Activated CD4-positive, alpha-beta memory T cell treated with anti-CD3 and anti-CD28 coated beads, Interleukin-2, amount 10 ng/mL, durations not matched to agents 7 days and 5 days (primary cell): ENCODE measurements at regions of chr6 and their contacts with region 1.

Region 1: GRCh38 chr6:125956506-125957390 is at the start of gene HINT3:
- DNase-seq: peak; percentile 97
- H3K4me3 Mint-ChIP-seq: no peak within 1 kb of the TSS
- H3K27ac Mint-ChIP-seq: peak within 1 kb of the TSS; percentile 44
- H3K4me1 Mint-ChIP-seq: peaks cover 8% of the 10 kb centered on the region
- H3K27me3 Mint-ChIP-seq: no peaks in the 10 kb centered on the region
- total RNA-seq, gene HINT3: 11.0 to 11.7 TPM

Region 2: DNA sequence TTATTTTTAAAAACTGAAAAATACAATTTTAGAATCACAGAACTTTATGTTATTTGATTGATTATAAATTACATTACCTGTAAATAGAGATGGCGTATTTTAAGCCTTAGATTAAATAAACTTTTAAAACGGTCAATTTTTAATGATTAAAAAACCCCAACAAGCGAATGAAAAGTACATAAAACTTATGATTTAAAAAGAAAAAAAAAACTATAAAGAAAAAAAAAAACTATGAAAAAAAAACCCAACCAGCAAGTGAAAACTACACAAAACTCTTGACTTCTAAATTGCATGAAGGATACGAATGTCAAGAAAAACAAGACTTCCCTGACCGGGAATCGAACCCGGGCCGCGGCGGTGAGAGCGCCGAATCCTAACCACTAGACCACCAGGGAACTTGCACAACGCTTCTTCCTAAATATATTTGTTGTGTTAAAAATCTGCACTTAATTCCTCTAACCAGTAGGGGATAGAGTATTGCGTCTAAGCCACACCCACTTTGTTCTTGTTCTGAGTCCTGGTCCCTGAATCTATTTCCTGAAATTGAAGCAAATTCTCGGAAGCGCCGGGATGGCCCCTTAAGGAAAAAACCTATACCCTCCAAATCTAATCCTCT is 176.7 kb before region 1 on chr6:
- CTCF ChIA-PET with region 1: interaction called, 80 read pairs
- POLR2A ChIA-PET with region 1: interaction called, 45 read pairs
- DNase-seq: peak; percentile 86
- H3K4me3 Mint-ChIP-seq: no peak overlapping the region
- H3K27ac Mint-ChIP-seq: no peak overlapping the region
- H3K4me1 Mint-ChIP-seq: peaks cover 13% of the 10 kb centered on the region
- H3K27me3 Mint-ChIP-seq: peaks cover 18% of the 10 kb centered on the region

Region 3: GRCh38 chr6:125858427-125859320 is 98.1 kb before region 1 on chr6:
- CTCF ChIA-PET with region 1: interaction called, 34 read pairs
- POLR2A ChIA-PET with region 1: no interaction called
- DNase-seq: peak; percentile 33
- H3K4me3 Mint-ChIP-seq: no peak overlapping the region
- H3K27ac Mint-ChIP-seq: no peak overlapping the region
- H3K4me1 Mint-ChIP-seq: peaks cover 11% of the 10 kb centered on the region
- H3K27me3 Mint-ChIP-seq: no peaks in the 10 kb centered on the region

Region 4: GRCh38 chr6:125906158-125906998 is 50.4 kb before region 1 on chr6:
- CTCF ChIA-PET with region 1: interaction called, 52 read pairs
- POLR2A ChIA-PET with region 1: interaction called, 6 read pairs
- DNase-seq: peak; percentile 45
- H3K4me3 Mint-ChIP-seq: no peak overlapping the region
- H3K27ac Mint-ChIP-seq: no peak overlapping the region
- H3K4me1 Mint-ChIP-seq: peaks cover 52% of the 10 kb centered on the region
- H3K27me3 Mint-ChIP-seq: no peaks in the 10 kb centered on the region

Region 5: GRCh38 chr6:125931733-125932450 is 24.9 kb before region 1 on chr6:
- CTCF ChIA-PET with region 1: interaction called, 11 read pairs
- POLR2A ChIA-PET with region 1: no interaction called
- DNase-seq: no peak
- H3K4me3 Mint-ChIP-seq: no peak overlapping the region
- H3K27ac Mint-ChIP-seq: peak overlapping the region; percentile 4
- H3K4me1 Mint-ChIP-seq: peaks cover 20% of the 10 kb centered on the region
- H3K27me3 Mint-ChIP-seq: no peaks in the 10 kb centered on the region

Region 6: GRCh38 chr6:125968493-125968892 is 11.7 kb after region 1 on chr6:
- CTCF ChIA-PET with region 1: interaction called, 41 read pairs
- POLR2A ChIA-PET with region 1: interaction called, 6 read pairs
- DNase-seq: no peak
- H3K4me3 Mint-ChIP-seq: no peak overlapping the region
- H3K27ac Mint-ChIP-seq: no peak overlapping the region
- H3K4me1 Mint-ChIP-seq: no peaks in the 10 kb centered on the region
- H3K27me3 Mint-ChIP-seq: no peaks in the 10 kb centered on the region

Region 7: DNA sequence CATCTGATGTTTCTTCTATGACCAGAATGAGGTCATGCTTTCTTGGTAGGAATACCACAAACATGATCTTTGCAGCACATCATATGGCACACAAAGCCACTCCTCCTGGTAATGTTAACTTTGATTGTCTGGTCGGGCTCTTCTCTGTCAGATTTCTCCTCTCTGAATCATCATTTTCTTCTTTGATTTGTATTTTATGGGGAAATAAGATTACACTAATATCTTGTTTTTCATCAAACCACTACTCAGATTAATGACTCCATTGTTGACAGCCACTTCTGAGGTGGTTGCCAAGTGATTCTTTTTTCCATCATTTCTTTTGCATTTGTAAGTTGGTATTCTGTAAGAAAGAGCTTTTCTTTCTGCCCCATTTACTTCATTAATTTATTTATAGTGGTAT is 59.1 kb after region 1 on chr6:
- CTCF ChIA-PET with region 1: no interaction called
- POLR2A ChIA-PET with region 1: no interaction called
- DNase-seq: no peak
- H3K4me3 Mint-ChIP-seq: no peak overlapping the region
- H3K27ac Mint-ChIP-seq: no peak overlapping the region
- H3K4me1 Mint-ChIP-seq: peaks cover 7% of the 10 kb centered on the region
- H3K27me3 Mint-ChIP-seq: no peaks in the 10 kb centered on the region